Activated B cell treated with CpG ODN at 0.5 μM for 24 hours (primary cell): ENCODE measurements at regions of chr12 and their contacts with region 1.

Region 1: GRCh38 chr12:4857472-4858291 is 52.0 kb upstream of the KCNA1 start:
- DNase-seq: peak; percentile 64
- ATAC-seq: peak; percentile 90
- H3K4me3 Mint-ChIP-seq: peak overlapping the region; percentile 73
- H3K27ac Mint-ChIP-seq: no peak overlapping the region
- H3K4me1 Mint-ChIP-seq: peaks cover 17% of the 10 kb centered on the region
- H3K27me3 Mint-ChIP-seq: peaks cover 35% of the 10 kb centered on the region
- CTCF ChIP-seq: no peak

Region 2: DNA sequence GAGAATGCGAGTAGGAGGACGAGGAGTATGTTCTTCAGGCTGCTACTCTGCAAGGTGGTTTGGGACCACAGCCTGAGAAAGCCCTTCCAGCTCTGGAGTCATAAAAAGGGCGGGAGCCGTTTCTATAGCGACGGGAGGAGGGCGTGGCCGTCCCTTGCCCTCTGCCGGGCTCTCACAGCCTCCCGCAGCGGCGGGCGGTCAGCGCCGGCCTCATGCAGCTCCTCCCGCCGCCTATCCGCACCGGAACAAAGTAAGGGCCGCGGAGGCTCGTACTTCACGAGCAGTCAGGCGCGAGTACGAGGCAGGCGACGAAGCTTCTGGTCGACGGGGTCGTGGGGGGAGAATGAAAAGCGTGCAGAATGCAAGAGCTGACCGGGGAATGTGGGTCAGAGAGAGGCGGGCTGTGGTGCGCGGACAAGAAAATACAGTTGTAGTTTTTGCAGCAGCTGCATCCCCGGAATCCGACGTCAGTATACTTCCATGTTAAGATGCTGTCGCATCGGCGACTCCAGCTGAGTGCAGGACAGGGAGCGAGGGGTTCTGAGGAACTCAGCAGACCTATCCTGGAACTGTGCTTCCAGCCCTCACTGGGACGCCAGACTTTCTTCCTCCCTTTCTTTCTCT is 295.5 kb before region 1 on chr12 and contains the start of gene DYRK4:
- CTCF ChIA-PET with region 1: no interaction called
- POLR2A ChIA-PET with region 1: no interaction called
- intact Hi-C with region 1: no loop called
- DNase-seq: no peak
- ATAC-seq: no peak
- H3K4me3 Mint-ChIP-seq: peak within 1 kb of the TSS; percentile 56
- H3K27ac Mint-ChIP-seq: no peak within 1 kb of the TSS
- H3K4me1 Mint-ChIP-seq: peaks cover 41% of the 10 kb centered on the region
- H3K27me3 Mint-ChIP-seq: no peaks in the 10 kb centered on the region
- CTCF ChIP-seq: no peak
- total RNA-seq, gene DYRK4: 19.0 and 22.1 TPM in 2 replicates

Region 3: DNA sequence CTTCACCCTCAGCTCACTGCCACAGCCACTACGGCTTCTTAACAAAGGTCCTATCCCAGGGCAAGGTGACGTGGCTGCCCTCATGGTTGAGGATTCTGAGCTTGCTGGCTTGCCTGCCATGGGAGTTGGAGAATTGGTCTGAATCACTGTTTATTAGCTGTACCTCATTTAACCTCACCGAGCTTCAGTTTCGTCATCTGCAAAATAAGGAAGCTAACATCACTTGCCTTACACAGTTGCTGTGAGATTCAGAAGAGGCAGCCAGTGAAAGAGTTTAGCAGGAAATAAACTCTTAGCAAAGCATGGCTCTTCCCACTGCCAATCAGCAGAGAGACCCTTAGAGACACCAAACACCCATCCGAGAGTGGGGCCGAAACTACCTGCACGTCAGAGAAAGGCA is 38.0 kb before region 1 on chr12:
- CTCF ChIA-PET with region 1: interaction called, 17 read pairs
- POLR2A ChIA-PET with region 1: interaction called, 5 read pairs
- intact Hi-C with region 1: loop called (anchors 1 kb)
- DNase-seq: no peak
- ATAC-seq: peak; percentile 84
- H3K4me3 Mint-ChIP-seq: peak overlapping the region; percentile 33
- H3K27ac Mint-ChIP-seq: peak overlapping the region; percentile 67
- H3K4me1 Mint-ChIP-seq: peaks cover 63% of the 10 kb centered on the region
- H3K27me3 Mint-ChIP-seq: peaks cover 5% of the 10 kb centered on the region
- CTCF ChIP-seq: no peak

Region 4: GRCh38 chr12:4909734-4910501 is 52.2 kb after region 1 on chr12 and contains the start of gene KCNA1:
- CTCF ChIA-PET with region 1: interaction called, 6 read pairs
- POLR2A ChIA-PET with region 1: no interaction called
- intact Hi-C with region 1: loop called (anchors 2 kb)
- DNase-seq: peak; percentile 18
- ATAC-seq: peak; percentile 25
- H3K4me3 Mint-ChIP-seq: peak within 1 kb of the TSS; percentile 91
- H3K27ac Mint-ChIP-seq: peak within 1 kb of the TSS; percentile 19
- H3K4me1 Mint-ChIP-seq: peaks cover 25% of the 10 kb centered on the region
- H3K27me3 Mint-ChIP-seq: peaks cover 43% of the 10 kb centered on the region
- CTCF ChIP-seq: no peak
- total RNA-seq, gene KCNA1: 0.04 TPM in 1 of 2 replicates, not detected in the other

Region 5: DNA sequence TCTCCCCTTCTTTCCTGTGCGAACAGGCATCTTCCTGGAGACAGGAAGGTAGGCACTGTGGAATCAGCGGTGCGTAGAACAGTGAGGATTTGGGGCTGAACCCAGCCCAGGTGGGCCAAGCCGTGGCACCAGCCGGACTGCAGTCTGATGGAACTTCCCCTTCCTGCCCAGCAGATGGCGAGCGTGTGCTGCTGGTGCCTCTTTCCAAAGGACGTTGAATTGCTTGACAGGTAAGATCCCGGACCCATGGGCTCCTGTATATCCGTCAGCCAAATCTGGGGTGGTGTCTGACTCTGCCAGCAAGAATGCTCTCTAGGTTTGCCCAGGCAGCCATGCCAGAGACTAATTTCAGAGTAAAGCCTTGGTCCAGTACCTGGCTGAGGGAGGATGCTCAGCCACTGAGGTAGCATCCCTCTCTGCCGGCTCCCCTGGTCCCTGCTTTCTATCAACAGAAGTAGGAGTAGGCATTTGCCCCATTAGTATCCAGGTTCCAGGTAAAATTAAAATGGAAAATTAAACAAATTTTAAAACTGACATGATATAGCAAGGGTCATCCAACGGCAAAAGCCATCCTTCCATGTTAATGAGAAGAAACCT is 164.9 kb after region 1 on chr12:
- CTCF ChIA-PET with region 1: interaction called, 6 read pairs
- POLR2A ChIA-PET with region 1: no interaction called
- intact Hi-C with region 1: loop called (anchors 5 kb)
- DNase-seq: peak; percentile 49
- ATAC-seq: peak; percentile 82
- H3K4me3 Mint-ChIP-seq: no peak overlapping the region
- H3K27ac Mint-ChIP-seq: no peak overlapping the region
- H3K4me1 Mint-ChIP-seq: no peaks in the 10 kb centered on the region
- H3K27me3 Mint-ChIP-seq: peaks cover 26% of the 10 kb centered on the region
- CTCF ChIP-seq: peak; percentile 61

Region 6: DNA sequence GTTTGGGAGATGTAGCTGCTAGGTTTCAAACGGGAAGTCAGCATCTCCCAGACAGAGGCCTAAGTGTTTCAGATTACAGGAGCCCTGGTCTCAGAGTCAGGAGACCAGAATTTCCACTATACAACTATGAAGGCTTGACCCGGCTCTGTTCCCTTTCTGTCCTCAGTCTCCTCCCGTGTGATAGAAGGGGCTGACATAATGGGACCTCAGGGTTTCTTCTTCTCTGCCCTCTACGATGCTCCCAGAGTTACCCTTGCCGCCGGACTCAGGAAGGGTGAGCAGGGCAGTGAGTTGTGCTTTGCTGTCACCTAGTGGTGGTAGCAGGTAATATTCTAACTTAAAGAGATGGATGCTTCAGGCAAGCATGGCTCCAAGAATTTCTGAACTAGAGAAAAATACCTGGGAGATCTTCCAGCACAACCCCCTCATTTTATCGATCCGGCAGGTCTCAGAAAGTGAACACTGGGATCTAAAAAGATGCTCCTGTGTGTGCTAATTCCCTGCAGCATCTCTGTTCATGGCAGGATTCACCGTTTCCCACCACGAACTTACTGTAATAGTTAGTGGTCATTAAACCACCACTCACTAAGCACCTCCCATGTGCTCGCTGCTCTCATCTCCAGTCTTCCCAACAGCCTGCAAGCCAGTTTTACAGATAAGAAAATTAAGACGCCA is 1182.3 kb after region 1 on chr12:
- CTCF ChIA-PET with region 1: no interaction called
- POLR2A ChIA-PET with region 1: no interaction called
- intact Hi-C with region 1: loop called (anchors 5 kb)
- DNase-seq: peak; percentile 22
- ATAC-seq: peak; percentile 83
- H3K4me3 Mint-ChIP-seq: peak overlapping the region; percentile 36
- H3K27ac Mint-ChIP-seq: no peak overlapping the region
- H3K4me1 Mint-ChIP-seq: no peaks in the 10 kb centered on the region
- H3K27me3 Mint-ChIP-seq: peaks cover 6% of the 10 kb centered on the region
- CTCF ChIP-seq: no peak